ENCODE measurements at regions of chr20 and their contacts with region 1.

Region 1: GRCh38 chr20:555933-556526 is 12.4 kb upstream of the CSNK2A1 start:
- DNase-seq: no peak
- H3K4me3 ChIP-seq: no peak overlapping the region
- H3K27ac ChIP-seq: no peak overlapping the region
- H3K4me1 ChIP-seq: no peaks in the 10 kb centered on the region
- H3K27me3 ChIP-seq: no peaks in the 10 kb centered on the region
- CTCF ChIP-seq: no peak

Region 2: GRCh38 chr20:496126-496696 is 59.8 kb before region 1 on chr20:
- CTCF ChIA-PET with region 1: no interaction called
- dilution Hi-C with region 1: no loop called
- in situ Hi-C with region 1: no loop called
- intact Hi-C with region 1: no loop called
- DNase-seq: no peak
- H3K4me3 ChIP-seq: no peak overlapping the region
- H3K27ac ChIP-seq: no peak overlapping the region
- H3K4me1 ChIP-seq: no peaks in the 10 kb centered on the region
- H3K27me3 ChIP-seq: no peaks in the 10 kb centered on the region
- CTCF ChIP-seq: no peak

Region 3: DNA sequence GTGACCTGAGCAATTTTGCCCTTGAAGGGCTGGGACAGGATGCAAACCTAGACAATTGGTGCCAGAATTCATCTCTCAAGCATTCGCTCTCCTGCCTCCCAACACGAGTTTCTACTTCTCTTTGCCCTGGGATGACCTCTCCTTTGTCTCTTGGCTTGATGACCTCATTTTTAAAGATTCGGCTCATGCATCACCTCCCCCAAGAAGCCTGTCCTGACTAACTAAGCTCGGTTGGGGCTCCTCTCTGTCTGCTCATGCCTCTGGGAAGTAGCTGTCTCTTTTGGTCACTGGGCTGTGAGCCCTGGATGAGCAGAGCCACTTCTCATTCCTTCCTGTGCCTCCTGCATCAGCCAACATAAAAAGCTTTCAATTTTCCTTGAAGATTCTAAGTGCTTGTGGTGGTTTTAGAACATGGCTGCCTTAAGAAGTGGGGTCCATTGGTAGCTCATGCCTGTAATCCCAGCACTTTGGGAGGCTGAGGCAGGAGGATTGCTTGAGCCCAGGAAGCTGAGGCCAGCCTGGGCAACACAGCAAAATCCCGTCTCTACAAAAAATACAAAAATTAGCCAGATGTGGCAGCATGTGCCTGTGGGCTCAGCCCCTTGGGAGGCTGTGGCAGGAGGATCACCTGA is 65.2 kb after region 1 on chr20:
- CTCF ChIA-PET with region 1: no interaction called
- dilution Hi-C with region 1: loop called (anchors 5 kb)
- in situ Hi-C with region 1: no loop called
- intact Hi-C with region 1: no loop called
- DNase-seq: no peak
- H3K4me3 ChIP-seq: no peak overlapping the region
- H3K27ac ChIP-seq: no peak overlapping the region
- H3K4me1 ChIP-seq: no peaks in the 10 kb centered on the region
- H3K27me3 ChIP-seq: no peaks in the 10 kb centered on the region
- CTCF ChIP-seq: no peak

Measured in mammary epithelial cell (primary cell).